ENCODE measurements at regions of chr1 and their contacts with region 1.

Region 1: DNA sequence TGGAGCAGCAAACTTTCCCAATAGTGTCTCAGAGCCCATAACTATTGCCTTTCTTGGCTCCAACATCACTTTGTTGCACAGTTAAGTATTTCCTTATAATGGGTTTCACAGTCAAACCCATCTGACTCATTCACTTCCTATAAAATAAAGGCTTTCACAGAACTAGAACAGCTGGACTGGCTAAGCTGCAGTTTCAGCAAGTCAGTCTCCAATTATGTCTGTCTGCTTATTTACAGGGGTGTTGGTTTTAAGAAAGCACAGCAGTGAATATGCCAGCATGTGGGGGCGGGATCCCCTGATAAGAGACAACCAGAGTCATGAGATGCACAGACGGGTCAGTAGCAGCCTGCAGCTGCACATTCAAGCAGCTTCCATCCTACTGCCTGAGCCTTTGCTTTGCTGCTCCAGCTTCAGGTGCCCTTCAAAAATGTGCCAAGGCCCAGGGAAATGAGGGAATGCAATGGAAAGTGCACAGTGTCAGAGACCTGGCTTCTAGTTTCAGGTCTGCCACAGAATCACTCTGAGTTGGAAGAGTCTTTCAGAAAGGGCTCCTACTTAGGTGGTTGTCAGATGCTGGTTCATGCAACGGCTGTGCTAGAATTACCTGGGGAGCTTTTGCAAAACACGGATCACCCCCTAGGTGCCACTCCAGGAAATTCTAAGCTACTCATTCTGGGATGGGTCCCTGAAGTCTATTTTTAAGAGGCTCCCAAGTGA is 24.8 kb downstream of the RNF19B start:
- DNase-seq: no peak

Region 2: GRCh38 chr1:33010932-33011731 is 71.3 kb after region 1 on chr1:
- in situ Hi-C with region 1: loop called (anchors 5 kb)
- DNase-seq: peak; percentile 78

Region 3: GRCh38 chr1:33060579-33061083 is 120.8 kb after region 1 on chr1:
- in situ Hi-C with region 1: no loop called
- DNase-seq: no peak

Region 4: DNA sequence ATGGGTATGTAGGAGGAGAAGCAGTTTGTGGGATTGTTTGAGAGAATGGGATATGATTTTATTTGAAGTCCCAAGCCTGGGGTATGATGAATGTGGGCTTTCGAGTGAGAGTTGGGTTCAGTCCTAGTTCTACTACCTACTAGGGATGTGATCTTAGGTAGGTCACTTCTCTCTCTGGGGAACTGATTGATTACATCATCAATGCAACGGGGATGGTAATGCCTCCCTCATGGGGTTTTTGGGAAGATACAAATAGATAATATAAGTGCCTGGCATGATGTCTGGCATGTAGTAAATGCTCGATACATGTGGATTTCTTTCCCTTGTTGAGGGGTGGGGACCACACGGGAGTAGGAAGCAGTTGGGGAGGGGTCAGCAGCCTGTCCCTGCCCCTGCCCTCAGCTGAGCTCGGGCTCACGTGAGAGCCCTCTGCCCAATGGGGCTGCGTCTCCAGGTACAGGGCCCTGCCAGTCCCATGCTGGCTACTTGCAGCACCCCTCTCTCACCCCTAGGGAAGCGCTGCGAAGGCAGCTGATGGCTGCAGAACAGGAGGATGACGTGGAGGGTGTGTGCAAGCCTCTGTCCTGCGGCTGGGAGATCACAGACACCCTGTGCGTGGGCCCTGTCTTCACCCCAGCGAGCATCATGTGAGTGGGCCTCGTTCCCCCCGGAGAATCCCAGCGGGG is 179.9 kb after region 1 on chr1:
- in situ Hi-C with region 1: no loop called
- DNase-seq: no peak